HEK293T (cell line): ENCODE measurements at regions of chr14 and their contacts with region 1.

Region 1: GRCh38 chr14:21978184-21978998 is 304.8 kb upstream of the OR4E1 start:
- DNase-seq: peak; percentile 77

Region 2: DNA sequence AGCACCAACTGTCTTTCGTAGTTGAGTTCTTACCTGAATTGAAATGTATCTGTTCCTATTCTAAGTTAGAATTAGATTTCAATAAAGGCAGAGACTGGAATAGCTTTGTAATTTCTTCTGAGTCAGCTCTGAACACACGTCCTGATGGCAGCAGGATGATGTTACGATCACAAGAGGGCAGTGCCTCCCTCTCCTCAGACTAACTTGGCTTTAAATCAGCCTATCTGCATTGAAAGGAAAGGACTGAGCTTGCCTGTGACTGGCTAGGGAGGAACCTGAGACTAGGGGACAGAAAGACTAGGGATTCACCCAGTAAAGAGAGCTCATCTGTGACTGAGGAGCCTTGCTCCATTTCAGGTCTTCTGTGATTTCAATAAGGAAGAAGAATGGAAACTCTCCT is 18.9 kb after region 1 on chr14:
- CTCF ChIA-PET with region 1: interaction called, 10 read pairs
- POLR2A ChIA-PET with region 1: no interaction called
- DNase-seq: peak; percentile 28